HEK293T (cell line): ENCODE measurements at regions of chr6 and their contacts with region 1.

Region 1: GRCh38 chr6:170554013-170554795 is at the start of gene TBP:
- DNase-seq: peak; percentile 98

Region 2: DNA sequence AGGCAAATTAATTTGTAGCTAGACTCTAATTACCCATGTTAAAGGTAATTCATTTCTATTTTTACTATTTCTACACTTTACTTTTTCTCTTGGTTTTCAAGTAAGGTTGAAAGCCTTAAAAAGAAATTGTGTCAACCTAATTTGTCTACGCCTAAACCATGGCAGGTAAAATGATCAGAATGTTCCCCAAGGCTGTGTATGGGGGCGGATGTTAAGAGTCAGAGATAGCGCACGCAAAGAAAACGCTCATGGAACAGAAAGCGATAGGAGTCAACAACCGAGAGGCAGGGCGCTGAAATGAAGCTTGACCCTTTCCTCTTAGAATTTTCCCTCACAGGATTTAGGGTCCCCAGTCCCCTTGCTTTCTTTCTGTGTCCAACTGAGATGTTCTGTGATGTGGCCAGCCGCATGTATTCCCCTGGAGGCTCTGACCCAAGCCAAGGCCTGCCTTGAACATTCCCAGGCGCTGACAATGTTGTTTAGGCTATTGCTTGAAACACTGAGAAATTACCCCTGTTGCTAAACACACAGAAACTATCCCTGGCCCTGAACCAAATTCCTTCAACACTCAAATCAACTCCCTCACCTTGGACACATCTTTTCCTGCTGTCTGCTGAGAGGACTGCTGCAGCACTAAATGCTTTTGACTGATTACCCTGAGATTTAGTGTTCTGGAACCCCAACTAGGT is 12.0 kb before region 1 on chr6:
- CTCF ChIA-PET with region 1: no interaction called
- POLR2A ChIA-PET with region 1: interaction called, 10 read pairs
- DNase-seq: no peak

Region 3: GRCh38 chr6:170584181-170584953 is 30.2 kb after region 1 on chr6 and contains the start of gene PDCD2:
- CTCF ChIA-PET with region 1: no interaction called
- POLR2A ChIA-PET with region 1: interaction called, 17 read pairs
- DNase-seq: peak; percentile 98